CD4-positive, alpha-beta memory T cell (primary cell): ENCODE measurements at regions of chr11 and their contacts with region 1.

Region 1: GRCh38 chr11:19240420-19241259 is at the start of gene E2F8:
- DNase-seq: peak; percentile 75 to 81 (median 76)
- H3K4me3 ChIP-seq: peak within 1 kb of the TSS; percentile 37 to 89
- H3K4me3 Mint-ChIP-seq: peak within 1 kb of the TSS; percentile 85 to 92 (median 88)
- H3K27ac ChIP-seq: no peak within 1 kb of the TSS
- H3K27ac Mint-ChIP-seq: peak within 1 kb of the TSS in 5 of 7 donors; percentile 29 to 82 (median 70)
- H3K4me1 ChIP-seq: peaks cover 14% of the 10 kb centered on the region
- H3K4me1 Mint-ChIP-seq: peaks cover 7 to 23% (median 13%) of the 10 kb centered on the region in 4 donors
- H3K27me3 ChIP-seq: peaks cover 10% of the 10 kb centered on the region
- H3K27me3 Mint-ChIP-seq: peaks cover 23% of the 10 kb centered on the region in 2 donors
- total RNA-seq, gene E2F8: not detected

Region 2: GRCh38 chr11:18958221-18958910 is 282.3 kb before region 1 on chr11:
- CTCF ChIA-PET with region 1: no interaction called
- POLR2A ChIA-PET with region 1: no interaction called
- intact Hi-C with region 1: no loop called
- DNase-seq: no peak
- H3K4me3 ChIP-seq: no peak overlapping the region
- H3K4me3 Mint-ChIP-seq: no peak overlapping the region
- H3K27ac ChIP-seq: no peak overlapping the region
- H3K27ac Mint-ChIP-seq: no peak overlapping the region
- H3K4me1 ChIP-seq: no peaks in the 10 kb centered on the region
- H3K4me1 Mint-ChIP-seq: no peaks in the 10 kb centered on the region
- H3K27me3 ChIP-seq: no peaks in the 10 kb centered on the region
- H3K27me3 Mint-ChIP-seq: peaks cover 3 to 20% of the 10 kb centered on the region in 2 donors

Region 3: GRCh38 chr11:19116971-19117750 is 123.5 kb before region 1 on chr11 and contains the start of gene ZDHHC13:
- CTCF ChIA-PET with region 1: no interaction called
- POLR2A ChIA-PET with region 1: no interaction called
- intact Hi-C with region 1: loop called (anchors 1 kb)
- DNase-seq: peak; percentile 91 to 93 (median 92)
- H3K4me3 ChIP-seq: peak within 1 kb of the TSS; percentile 78 to 81
- H3K4me3 Mint-ChIP-seq: peak within 1 kb of the TSS; percentile 90 to 98 (median 94)
- H3K27ac ChIP-seq: peak within 1 kb of the TSS; percentile 73
- H3K27ac Mint-ChIP-seq: peak within 1 kb of the TSS; percentile 46 to 97 (median 92)
- H3K4me1 ChIP-seq: peaks cover 44% of the 10 kb centered on the region
- H3K4me1 Mint-ChIP-seq: peaks cover 40 to 59% (median 48%) of the 10 kb centered on the region in 4 donors
- H3K27me3 ChIP-seq: no peaks in the 10 kb centered on the region
- H3K27me3 Mint-ChIP-seq: peaks cover 0 to 2% of the 10 kb centered on the region in 2 donors
- total RNA-seq, gene ZDHHC13: 15.6 to 16.1 TPM

Region 4: DNA sequence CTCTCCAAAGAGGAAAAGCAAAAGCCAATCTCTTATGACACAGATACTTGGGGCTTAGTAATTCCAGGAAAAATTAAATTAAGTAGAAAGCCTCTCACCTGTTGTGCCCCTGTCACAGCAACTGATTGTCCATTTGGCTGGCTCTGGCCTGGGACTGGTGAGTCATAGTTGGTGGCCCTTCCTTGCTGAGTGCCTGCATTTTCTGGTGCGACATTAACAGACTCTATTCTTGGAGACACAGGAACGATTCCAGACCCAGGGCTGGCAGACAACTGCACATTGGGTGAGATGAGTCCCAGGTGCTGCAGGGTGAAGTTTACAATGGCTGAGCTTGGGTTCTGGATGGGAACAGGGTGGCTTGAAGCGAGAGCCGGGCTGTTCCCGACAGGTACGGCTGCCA is 15.5 kb before region 1 on chr11:
- CTCF ChIA-PET with region 1: no interaction called
- POLR2A ChIA-PET with region 1: no interaction called
- intact Hi-C with region 1: no loop called
- DNase-seq: no peak
- H3K4me3 ChIP-seq: no peak overlapping the region
- H3K4me3 Mint-ChIP-seq: no peak overlapping the region
- H3K27ac ChIP-seq: no peak overlapping the region
- H3K27ac Mint-ChIP-seq: no peak overlapping the region
- H3K4me1 ChIP-seq: peaks cover 6% of the 10 kb centered on the region
- H3K4me1 Mint-ChIP-seq: peaks cover 0 to 2% (median under 1%) of the 10 kb centered on the region in 4 donors
- H3K27me3 ChIP-seq: no peaks in the 10 kb centered on the region
- H3K27me3 Mint-ChIP-seq: no peaks in the 10 kb centered on the region